ENCODE measurements at regions of chr3 and their contacts with region 1.

Region 1: DNA sequence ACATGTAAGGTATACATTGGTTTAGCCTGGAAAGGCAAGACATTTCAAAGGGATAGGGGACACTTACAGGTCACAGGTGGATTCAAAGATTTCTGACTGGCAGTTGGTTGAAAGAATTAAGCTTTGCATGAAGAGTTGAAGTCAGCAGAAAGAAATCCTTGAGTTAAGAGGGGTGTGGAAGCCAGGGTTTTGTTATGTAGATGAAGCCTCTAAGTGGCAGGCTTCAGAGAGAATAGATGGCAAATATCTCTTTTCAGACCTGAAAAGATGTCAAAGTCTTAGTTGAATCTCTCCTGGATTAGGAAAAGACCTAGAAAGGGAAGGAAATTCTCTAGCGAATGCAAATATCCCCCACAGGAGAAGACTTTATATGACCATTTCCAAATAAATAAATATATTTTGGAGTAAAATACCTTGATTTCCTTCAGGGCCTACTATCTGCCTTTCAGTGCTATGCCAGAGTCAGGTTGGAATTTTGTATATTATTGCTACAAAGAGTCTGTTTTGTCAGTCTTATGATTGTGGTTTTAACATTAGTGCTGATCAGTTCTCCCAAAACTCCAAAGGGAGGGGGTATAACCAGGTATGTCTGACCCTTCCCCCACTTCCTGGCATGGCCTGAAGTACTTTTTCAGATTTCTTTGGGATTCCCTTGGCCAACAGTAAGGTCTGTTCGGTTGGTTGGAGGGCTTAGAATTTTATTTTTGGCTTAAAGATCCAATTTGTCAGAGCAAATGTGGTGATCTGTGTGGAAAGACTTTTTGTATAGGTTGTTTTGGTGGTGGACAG is 286.4 kb downstream of the LRTM1 start:
- DNase-seq: no peak
- H3K4me3 ChIP-seq: peak overlapping the region; percentile 3 to 45 (median 16); a peak in 4 of 8 replicates
- H3K27ac ChIP-seq: peak overlapping the region; percentile 65; the same call in 1 of the 2 replicates
- H3K4me1 ChIP-seq: peaks cover 9 to 26% (median 23%) of the 10 kb centered on the region in 4 experiments
- H3K27me3 ChIP-seq: no peaks in the 10 kb centered on the region
- CTCF ChIP-seq: no peak
- EP300 ChIP-seq: no peak
- POLR2A ChIP-seq: no peak
- RAD21 ChIP-seq: no peak

Region 2: DNA sequence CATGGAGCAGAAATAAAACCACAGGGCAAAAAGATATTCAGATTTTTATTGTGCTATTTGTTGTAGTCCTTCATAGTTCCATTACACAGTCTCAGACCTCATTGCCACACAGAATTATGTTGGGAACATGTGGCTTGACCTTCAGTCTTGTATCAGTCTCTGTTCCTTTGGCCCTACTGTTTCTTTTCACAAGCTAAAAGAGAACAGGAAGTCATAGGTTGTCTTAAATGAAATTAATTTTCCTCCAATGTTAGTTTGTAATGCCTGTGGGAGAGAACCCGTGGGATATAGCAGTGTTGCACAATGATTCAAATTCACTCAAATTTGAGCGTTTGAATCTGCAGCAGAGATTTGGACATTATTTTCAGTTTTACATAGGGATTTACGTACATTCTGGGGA is 73.5 kb before region 1 on chr3:
- CTCF ChIA-PET with region 1: no interaction called
- POLR2A ChIA-PET with region 1: no interaction called
- DNase-seq: no peak
- H3K4me3 ChIP-seq: no peak overlapping the region
- H3K27ac ChIP-seq: no peak overlapping the region
- H3K4me1 ChIP-seq: no peaks in the 10 kb centered on the region
- H3K27me3 ChIP-seq: no peaks in the 10 kb centered on the region
- CTCF ChIP-seq: no peak
- EP300 ChIP-seq: no peak
- POLR2A ChIP-seq: no peak
- RAD21 ChIP-seq: no peak

Region 3: GRCh38 chr3:54578417-54578816 is 63.0 kb before region 1 on chr3:
- CTCF ChIA-PET with region 1: no interaction called
- POLR2A ChIA-PET with region 1: no interaction called
- DNase-seq: no peak
- H3K4me3 ChIP-seq: no peak overlapping the region
- H3K27ac ChIP-seq: no peak overlapping the region
- H3K4me1 ChIP-seq: peaks cover 0 to 3% (median 0%) of the 10 kb centered on the region in 4 experiments; a peak in 2 of 7 replicates
- H3K27me3 ChIP-seq: no peaks in the 10 kb centered on the region
- CTCF ChIP-seq: no peak
- EP300 ChIP-seq: no peak
- POLR2A ChIP-seq: no peak
- RAD21 ChIP-seq: no peak

Region 4: DNA sequence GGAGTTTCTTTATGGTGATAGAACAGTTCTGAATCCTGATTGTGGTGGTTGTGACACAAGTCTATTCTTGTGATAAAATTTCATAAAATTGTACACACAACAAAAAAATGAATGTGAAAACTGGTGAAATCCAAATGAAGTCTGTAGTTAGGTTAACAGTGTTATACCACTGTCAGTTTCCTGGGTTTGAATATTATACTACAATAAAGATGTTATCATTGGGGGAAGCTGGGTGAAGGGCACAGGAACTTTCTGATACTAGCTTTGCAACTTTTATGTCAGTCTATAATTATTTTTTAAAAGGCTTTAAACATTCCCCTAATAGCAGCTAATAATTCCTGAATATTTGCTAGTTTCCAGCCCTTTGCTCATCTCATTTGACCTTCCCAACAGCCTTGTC is 33.4 kb before region 1 on chr3:
- CTCF ChIA-PET with region 1: no interaction called
- POLR2A ChIA-PET with region 1: no interaction called
- DNase-seq: no peak
- H3K4me3 ChIP-seq: no peak overlapping the region
- H3K27ac ChIP-seq: no peak overlapping the region
- H3K4me1 ChIP-seq: no peaks in the 10 kb centered on the region
- H3K27me3 ChIP-seq: no peaks in the 10 kb centered on the region; a peak in 1 of 7 replicates
- CTCF ChIP-seq: no peak
- EP300 ChIP-seq: no peak
- POLR2A ChIP-seq: no peak
- RAD21 ChIP-seq: no peak

Region 5: DNA sequence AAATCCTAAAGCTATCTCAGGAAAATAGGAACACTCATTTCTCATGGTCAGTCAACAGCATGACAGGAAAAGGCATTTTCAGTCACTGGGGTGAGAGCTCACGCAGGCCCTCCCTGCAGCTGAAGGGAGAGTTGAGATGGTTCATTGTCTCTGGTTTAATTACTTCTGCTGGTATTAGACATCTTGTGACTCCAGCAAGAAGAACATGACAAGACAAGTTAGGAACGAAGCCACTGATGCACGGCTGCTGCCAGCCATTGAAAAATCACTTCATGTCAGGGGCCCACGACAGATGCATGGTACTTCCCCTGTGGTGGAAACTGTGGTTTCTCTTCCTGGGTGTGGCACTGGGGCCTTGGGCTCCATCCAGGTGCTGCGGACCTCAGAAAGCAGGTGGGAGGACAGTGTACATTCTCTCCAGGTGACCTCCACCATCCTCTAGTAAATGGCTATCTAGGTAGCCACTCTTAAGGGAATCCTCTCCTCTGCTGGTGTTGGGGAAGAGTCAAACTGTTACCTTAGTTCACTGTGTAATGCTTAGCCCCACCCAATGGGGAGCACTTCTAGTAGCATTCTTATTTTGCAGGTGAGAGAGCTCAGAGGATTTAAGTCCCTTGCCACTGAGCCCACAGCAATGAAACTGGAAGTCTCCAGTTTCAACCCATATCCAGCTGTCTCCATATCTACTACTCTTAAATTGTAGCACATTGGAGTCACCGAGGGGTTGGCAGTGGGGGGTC is 12.2 kb after region 1 on chr3:
- CTCF ChIA-PET with region 1: no interaction called
- POLR2A ChIA-PET with region 1: interaction called, 14 read pairs
- DNase-seq: no peak
- H3K4me3 ChIP-seq: no peak overlapping the region
- H3K27ac ChIP-seq: no peak overlapping the region
- H3K4me1 ChIP-seq: peaks cover 0 to 6% (median 0%) of the 10 kb centered on the region in 4 experiments; a peak in 1 of 7 replicates
- H3K27me3 ChIP-seq: no peaks in the 10 kb centered on the region
- CTCF ChIP-seq: peak in 1 of 3 experiments; percentile 30; a peak in 1 of 4 replicates
- EP300 ChIP-seq: no peak
- POLR2A ChIP-seq: no peak
- RAD21 ChIP-seq: no peak; a peak in 1 of 4 replicates

Region 6: GRCh38 chr3:54660714-54661132 is 19.3 kb after region 1 on chr3:
- CTCF ChIA-PET with region 1: no interaction called
- POLR2A ChIA-PET with region 1: interaction called, 14 read pairs
- DNase-seq: no peak
- H3K4me3 ChIP-seq: no peak overlapping the region
- H3K27ac ChIP-seq: no peak overlapping the region
- H3K4me1 ChIP-seq: peaks cover 0 to 6% (median 1%) of the 10 kb centered on the region in 4 experiments; a peak in 3 of 7 replicates
- H3K27me3 ChIP-seq: no peaks in the 10 kb centered on the region
- CTCF ChIP-seq: no peak
- EP300 ChIP-seq: no peak
- POLR2A ChIP-seq: no peak
- RAD21 ChIP-seq: no peak

Measured in H1 (cell line).